ENCODE measurements at regions of chrX and their contacts with region 1.

Region 1: GRCh38 chrX:81201671-81202455 is at the starts of genes HMGN5 and SH3BGRL:
- DNase-seq: peak; percentile 85
- H3K4me3 ChIP-seq: peak within 1 kb of the TSS; percentile 95
- H3K27ac ChIP-seq: peak within 1 kb of the TSS; percentile 95
- H3K4me1 ChIP-seq: peaks cover 21% of the 10 kb centered on the region
- CTCF ChIP-seq: no peak
- total RNA-seq, gene HMGN5: 2.0 and 9.5 TPM in 2 replicates
- total RNA-seq, gene SH3BGRL: 56.2 and 63.5 TPM in 2 replicates

Region 2: DNA sequence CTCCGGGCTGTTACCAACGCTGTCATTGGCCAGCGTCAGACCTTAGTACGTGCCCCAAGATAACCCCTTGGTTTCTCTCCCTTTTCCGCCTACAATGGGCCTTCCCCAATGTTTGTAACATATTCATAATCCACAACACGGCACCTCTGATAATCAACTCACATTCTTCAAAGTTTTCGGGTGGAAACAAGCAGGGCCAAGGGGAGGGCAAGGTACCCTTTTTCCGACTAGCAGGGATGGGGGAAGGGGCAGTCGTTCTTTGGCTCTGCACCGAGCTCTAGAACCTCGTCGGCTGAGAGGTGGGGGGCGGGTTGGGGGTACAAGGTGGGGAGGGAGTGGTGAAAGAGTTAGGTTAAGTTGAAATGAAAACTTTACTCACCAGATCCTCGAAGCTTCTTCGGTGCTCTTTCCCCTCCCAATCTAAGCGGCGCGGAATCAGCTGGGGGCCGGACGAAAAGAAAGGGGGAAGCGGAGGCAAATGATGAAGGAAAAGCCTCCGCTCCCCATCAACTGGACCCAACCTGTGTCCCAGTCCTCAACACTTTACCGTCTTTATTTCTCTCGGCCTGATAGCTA is 393.6 kb before region 1 on chrX:
- CTCF ChIA-PET with region 1: interaction called, 3 read pairs
- POLR2A ChIA-PET with region 1: interaction called, 13 read pairs
- intact Hi-C with region 1: loop called (anchors 5 kb)
- DNase-seq: peak; percentile 82
- H3K4me3 ChIP-seq: peak overlapping the region; percentile 92
- H3K27ac ChIP-seq: peak overlapping the region; percentile 78
- H3K4me1 ChIP-seq: peaks cover 33% of the 10 kb centered on the region
- CTCF ChIP-seq: no peak

Region 3: GRCh38 chrX:81082649-81083048 is 119.2 kb before region 1 on chrX:
- CTCF ChIA-PET with region 1: no interaction called
- POLR2A ChIA-PET with region 1: no interaction called
- intact Hi-C with region 1: loop called (anchors 5 kb)
- DNase-seq: peak; percentile 91
- H3K4me3 ChIP-seq: peak overlapping the region; percentile 46
- H3K27ac ChIP-seq: peak overlapping the region; percentile 82
- H3K4me1 ChIP-seq: peaks cover 42% of the 10 kb centered on the region
- CTCF ChIP-seq: peak; percentile 52